ENCODE measurements at regions of chr12 and their contacts with region 1.

Region 1: DNA sequence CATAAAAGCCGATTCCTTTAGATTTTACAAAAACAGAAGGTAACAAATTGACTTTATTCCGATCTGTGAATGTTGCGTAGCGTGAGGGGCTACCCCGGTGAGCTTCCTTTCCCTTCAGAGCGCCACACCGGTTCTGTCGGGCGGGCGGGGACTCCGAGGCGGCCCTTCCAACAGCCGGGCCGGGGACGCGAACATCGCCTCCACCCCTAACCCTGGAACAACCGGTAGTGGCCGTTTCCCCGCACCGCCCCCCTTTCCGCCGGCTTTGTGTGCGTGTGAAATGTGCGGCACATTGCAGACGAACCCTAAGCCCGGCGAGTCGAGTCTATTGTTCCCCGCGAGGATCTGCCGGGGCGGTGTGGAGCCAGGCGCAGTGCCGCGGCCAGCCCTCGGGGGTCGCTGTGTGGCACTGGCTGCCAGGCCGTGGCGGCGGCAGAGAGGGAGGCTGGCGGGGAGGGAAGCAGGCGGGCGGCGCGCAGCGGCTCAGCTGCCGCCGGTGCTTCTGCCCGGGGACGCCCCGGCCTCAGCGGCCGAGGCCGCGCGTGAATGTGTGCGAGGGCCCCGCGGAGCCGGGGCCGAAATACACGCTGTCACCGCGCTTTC is 775 bp upstream of the ARID2 start:
- DNase-seq: peak; percentile 99
- H3K4me3 Mint-ChIP-seq: peak overlapping the region; percentile 91
- H3K27ac Mint-ChIP-seq: peak overlapping the region; percentile 99
- H3K4me1 Mint-ChIP-seq: peaks cover 27% of the 10 kb centered on the region
- H3K27me3 Mint-ChIP-seq: no peaks in the 10 kb centered on the region

Region 2: GRCh38 chr12:45215419-45216229 is 513.1 kb before region 1 on chr12 and contains the start of gene ANO6:
- intact Hi-C with region 1: loop called (anchors 2 kb)
- DNase-seq: peak; percentile 95
- H3K4me3 Mint-ChIP-seq: peak within 1 kb of the TSS; percentile 93
- H3K27ac Mint-ChIP-seq: peak within 1 kb of the TSS; percentile 90
- H3K4me1 Mint-ChIP-seq: peaks cover 30% of the 10 kb centered on the region
- H3K27me3 Mint-ChIP-seq: no peaks in the 10 kb centered on the region
- total RNA-seq, gene ANO6: 24.1 and 24.8 TPM in 2 replicates

Region 3: DNA sequence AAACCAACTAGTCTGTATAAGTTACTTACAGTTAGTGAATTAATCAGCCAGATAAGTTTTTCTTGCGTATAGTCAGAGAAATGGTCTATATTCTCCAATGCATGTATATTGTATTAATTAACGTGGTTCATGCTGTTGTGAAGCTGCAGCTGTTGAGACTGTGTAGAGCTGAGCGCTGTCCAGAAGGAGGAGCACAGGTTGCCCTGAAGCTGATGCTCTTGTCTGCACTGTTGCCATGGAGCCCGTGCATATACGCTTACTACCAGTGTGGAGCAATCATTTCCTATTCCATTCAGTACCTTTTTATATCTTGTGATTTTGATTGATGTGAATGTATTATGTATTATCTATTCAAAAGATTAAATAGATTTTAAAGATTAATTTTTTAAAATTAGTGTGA is 73.5 kb before region 1 on chr12:
- intact Hi-C with region 1: loop called (anchors 1 kb)
- DNase-seq: peak; percentile 87
- H3K4me3 Mint-ChIP-seq: no peak overlapping the region
- H3K27ac Mint-ChIP-seq: no peak overlapping the region
- H3K4me1 Mint-ChIP-seq: peaks cover 3% of the 10 kb centered on the region
- H3K27me3 Mint-ChIP-seq: peaks cover 41% of the 10 kb centered on the region

Region 4: DNA sequence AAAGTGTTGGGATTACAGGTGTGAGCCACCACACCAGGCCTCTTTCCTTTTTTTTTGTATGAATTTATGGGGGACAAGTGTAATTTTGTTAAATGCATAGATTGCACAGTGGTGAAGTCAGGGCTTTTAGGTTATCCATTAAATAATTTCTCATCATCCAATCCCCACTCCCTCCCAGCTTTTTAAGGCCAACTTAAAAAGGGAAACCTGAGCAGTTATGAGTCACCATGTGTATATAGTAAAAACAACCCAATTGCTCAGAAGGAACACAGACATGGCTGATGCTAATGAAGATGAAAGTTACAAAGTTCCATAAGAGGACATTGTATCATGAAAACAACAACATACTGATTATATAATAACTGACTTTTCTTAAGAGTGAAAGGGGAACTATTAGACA is 24.8 kb before region 1 on chr12:
- intact Hi-C with region 1: no loop called
- DNase-seq: no peak
- H3K4me3 Mint-ChIP-seq: no peak overlapping the region
- H3K27ac Mint-ChIP-seq: no peak overlapping the region
- H3K4me1 Mint-ChIP-seq: no peaks in the 10 kb centered on the region
- H3K27me3 Mint-ChIP-seq: peaks cover 4% of the 10 kb centered on the region

Region 5: DNA sequence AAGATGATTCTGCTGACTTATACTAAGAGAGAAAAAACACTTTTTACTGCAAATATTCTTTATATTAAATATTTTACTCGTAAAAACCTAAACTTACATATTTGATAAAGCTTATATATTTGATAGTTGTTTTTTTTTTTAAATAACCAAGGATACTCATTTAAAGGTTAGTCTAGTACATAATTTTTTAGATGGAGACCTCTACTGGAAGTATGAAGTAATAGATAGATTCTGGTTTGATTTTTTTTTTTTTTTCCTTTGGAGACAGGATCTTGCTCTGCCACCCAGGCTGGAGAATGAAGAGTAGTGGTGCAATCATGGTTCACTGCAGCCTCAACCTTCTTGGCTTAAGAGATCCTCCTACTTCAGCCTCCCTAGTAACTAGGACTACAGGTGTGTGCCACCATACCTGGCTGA is 17.1 kb after region 1 on chr12:
- intact Hi-C with region 1: loop called (anchors 2 kb)
- DNase-seq: no peak
- H3K4me3 Mint-ChIP-seq: no peak overlapping the region
- H3K27ac Mint-ChIP-seq: no peak overlapping the region
- H3K4me1 Mint-ChIP-seq: peaks cover 39% of the 10 kb centered on the region
- H3K27me3 Mint-ChIP-seq: no peaks in the 10 kb centered on the region

Region 6: DNA sequence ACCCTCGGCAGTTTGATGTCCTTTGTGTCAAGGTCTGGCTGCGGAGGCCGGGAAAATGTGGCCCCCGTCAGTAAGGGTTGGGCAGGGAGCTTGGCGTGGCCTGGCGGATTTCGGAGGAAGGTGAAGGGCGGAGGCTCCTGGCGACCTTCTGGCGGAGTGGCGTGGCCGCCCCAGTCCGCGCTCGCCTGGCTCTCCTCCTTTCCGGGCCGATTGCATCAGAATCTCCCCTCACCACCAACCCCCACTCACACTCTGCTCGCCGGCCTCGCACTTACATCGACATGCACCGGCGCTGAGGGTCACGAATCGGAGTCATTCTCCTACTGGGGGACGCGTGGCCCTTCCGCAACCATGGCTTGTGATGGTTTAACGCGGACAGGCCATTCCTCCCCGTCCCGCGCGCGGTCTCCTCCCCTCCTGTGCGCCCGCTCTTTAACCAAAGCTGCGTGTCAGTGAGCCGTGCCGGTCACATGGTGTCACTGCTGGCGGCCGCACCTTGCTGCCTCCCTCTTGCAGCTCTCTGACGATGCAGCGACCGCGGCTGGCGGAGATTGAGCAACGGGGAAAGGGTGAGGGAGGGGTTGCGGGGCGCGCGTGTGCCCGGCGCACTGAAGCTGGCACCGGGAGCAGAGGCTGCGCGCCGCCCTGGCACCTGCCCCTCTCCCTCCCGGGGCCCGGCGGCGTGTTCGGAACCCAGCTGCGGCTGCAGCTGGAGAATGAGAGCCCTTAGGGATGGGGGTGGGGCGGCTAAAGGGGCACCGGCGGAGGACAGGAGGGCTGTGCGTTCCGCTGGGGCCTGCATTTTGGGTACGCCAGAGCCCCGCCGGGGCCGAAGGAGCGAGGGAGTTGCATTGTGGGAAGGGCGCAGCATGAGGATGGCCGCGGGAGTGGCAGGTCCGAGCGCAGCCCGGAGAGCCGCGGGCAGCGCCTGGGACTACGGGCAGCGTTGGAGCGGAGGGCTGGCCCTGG is 540.1 kb after region 1 on chr12 and contains the start of gene SLC38A1:
- intact Hi-C with region 1: loop called (anchors 2 kb)
- DNase-seq: peak; percentile 96
- H3K4me3 Mint-ChIP-seq: no peak within 1 kb of the TSS
- H3K27ac Mint-ChIP-seq: no peak within 1 kb of the TSS
- H3K4me1 Mint-ChIP-seq: peaks cover 21% of the 10 kb centered on the region
- H3K27me3 Mint-ChIP-seq: no peaks in the 10 kb centered on the region
- total RNA-seq, gene SLC38A1: 180 and 181 TPM in 2 replicates

Measured in activated CD4-positive, alpha-beta T cell treated with anti-CD3 and anti-CD28 coated beads, Interleukin-2, amount 10 ng/mL, durations not matched to agents 24 days and 14 days (primary cell).